ENCODE measurements at regions of chr14 and their contacts with region 1.

Region 1: GRCh38 chr14:61342486-61342885 is 21.1 kb downstream of the PRKCH start:
- DNase-seq: peak; percentile 57 to 90 (median 81)
- ATAC-seq: peak; percentile 68 to 75 (median 74)
- H3K4me3 ChIP-seq: peak overlapping the region; percentile 3 to 59
- H3K4me3 Mint-ChIP-seq: peak overlapping the region; percentile 57 to 83 (median 71)
- H3K27ac ChIP-seq: peak overlapping the region; percentile 81
- H3K27ac Mint-ChIP-seq: peak overlapping the region; percentile 96 to 100
- H3K4me1 ChIP-seq: peaks cover 91 to 93% of the 10 kb centered on the region in 2 experiments
- H3K4me1 Mint-ChIP-seq: peaks cover 56 to 96% (median 96%) of the 10 kb centered on the region in 3 donors
- H3K27me3 ChIP-seq: no peaks in the 10 kb centered on the region
- H3K27me3 Mint-ChIP-seq: no peaks in the 10 kb centered on the region

Region 2: GRCh38 chr14:61280092-61280525 is 62.4 kb before region 1 on chr14:
- CTCF ChIA-PET with region 1: no interaction called
- POLR2A ChIA-PET with region 1: no interaction called
- DNase-seq: peak in 29 of 35 experiments; percentile 7 to 62 (median 34)
- ATAC-seq: peak; percentile 37 to 51 (median 48)
- H3K4me3 ChIP-seq: peak overlapping the region; percentile 62 to 90
- H3K4me3 Mint-ChIP-seq: peak overlapping the region; percentile 88 to 95 (median 89)
- H3K27ac ChIP-seq: peak overlapping the region; percentile 66
- H3K27ac Mint-ChIP-seq: peak overlapping the region; percentile 91 to 92
- H3K4me1 ChIP-seq: peaks cover 0 to 16% of the 10 kb centered on the region in 2 experiments
- H3K4me1 Mint-ChIP-seq: peaks cover 23 to 31% (median 28%) of the 10 kb centered on the region in 3 donors
- H3K27me3 ChIP-seq: peaks cover 5 to 26% of the 10 kb centered on the region in 2 experiments
- H3K27me3 Mint-ChIP-seq: peaks cover 0 to 6% of the 10 kb centered on the region in 2 donors

Region 3: GRCh38 chr14:61321385-61322010 is 21.0 kb before region 1 on chr14 and contains the start of gene PRKCH:
- CTCF ChIA-PET with region 1: interaction called in 1 of 2 experiments, 6 read pairs
- POLR2A ChIA-PET with region 1: interaction called, 3 to 15 read pairs
- DNase-seq: peak; percentile 66 to 90 (median 83)
- ATAC-seq: peak; percentile 80 to 84 (median 81)
- H3K4me3 ChIP-seq: peak within 1 kb of the TSS; percentile 93 to 98
- H3K4me3 Mint-ChIP-seq: peak within 1 kb of the TSS; percentile 98 to 99 (median 99)
- H3K27ac ChIP-seq: peak within 1 kb of the TSS; percentile 93
- H3K27ac Mint-ChIP-seq: peak within 1 kb of the TSS; percentile 95 to 96
- H3K4me1 ChIP-seq: peaks cover 9 to 13% of the 10 kb centered on the region in 2 experiments
- H3K4me1 Mint-ChIP-seq: peaks cover 25 to 28% (median 26%) of the 10 kb centered on the region in 3 donors
- H3K27me3 ChIP-seq: no peaks in the 10 kb centered on the region
- H3K27me3 Mint-ChIP-seq: no peaks in the 10 kb centered on the region
- total RNA-seq, gene PRKCH: 267 to 436 (median 326) TPM

Region 4: GRCh38 chr14:61547186-61548086 is 204.9 kb after region 1 on chr14:
- CTCF ChIA-PET with region 1: no interaction called
- POLR2A ChIA-PET with region 1: no interaction called
- DNase-seq: no peak
- ATAC-seq: no peak
- H3K4me3 ChIP-seq: no peak overlapping the region
- H3K4me3 Mint-ChIP-seq: peak overlapping the region in 1 of 3 donors; percentile 45
- H3K27ac ChIP-seq: no peak overlapping the region
- H3K27ac Mint-ChIP-seq: peak overlapping the region; percentile 62 to 69
- H3K4me1 ChIP-seq: peaks cover 0 to 4% of the 10 kb centered on the region in 2 experiments
- H3K4me1 Mint-ChIP-seq: peaks cover 42 to 51% (median 42%) of the 10 kb centered on the region in 3 donors
- H3K27me3 ChIP-seq: no peaks in the 10 kb centered on the region
- H3K27me3 Mint-ChIP-seq: no peaks in the 10 kb centered on the region

Region 5: GRCh38 chr14:61698206-61698980 is 355.9 kb after region 1 on chr14:
- CTCF ChIA-PET with region 1: interaction called in 1 of 2 experiments, 10 read pairs
- POLR2A ChIA-PET with region 1: no interaction called
- DNase-seq: no peak
- ATAC-seq: no peak
- H3K4me3 ChIP-seq: peak overlapping the region; percentile 8 to 38
- H3K4me3 Mint-ChIP-seq: peak overlapping the region; percentile 93 to 99 (median 97)
- H3K27ac ChIP-seq: no peak overlapping the region
- H3K27ac Mint-ChIP-seq: peak overlapping the region; percentile 79 to 92
- H3K4me1 ChIP-seq: peaks cover 21 to 44% of the 10 kb centered on the region in 2 experiments
- H3K4me1 Mint-ChIP-seq: peaks cover 68 to 73% (median 70%) of the 10 kb centered on the region in 3 donors
- H3K27me3 ChIP-seq: no peaks in the 10 kb centered on the region
- H3K27me3 Mint-ChIP-seq: no peaks in the 10 kb centered on the region

Region 6: GRCh38 chr14:62667421-62667921 is 1325.0 kb after region 1 on chr14:
- CTCF ChIA-PET with region 1: no interaction called
- POLR2A ChIA-PET with region 1: no interaction called
- DNase-seq: no peak
- ATAC-seq: no peak
- H3K4me3 ChIP-seq: no peak overlapping the region
- H3K4me3 Mint-ChIP-seq: no peak overlapping the region
- H3K27ac ChIP-seq: no peak overlapping the region
- H3K27ac Mint-ChIP-seq: no peak overlapping the region
- H3K4me1 ChIP-seq: no peaks in the 10 kb centered on the region
- H3K4me1 Mint-ChIP-seq: no peaks in the 10 kb centered on the region
- H3K27me3 ChIP-seq: peaks cover 0 to 2% of the 10 kb centered on the region in 2 experiments
- H3K27me3 Mint-ChIP-seq: no peaks in the 10 kb centered on the region

Measured in T-cell (primary cell).